CD8-positive, alpha-beta memory T cell (primary cell): ENCODE measurements at regions of chr2 and their contacts with region 1.

Region 1: GRCh38 chr2:47767880-47768609 is 14.9 kb upstream of the MSH6 start:
- DNase-seq: peak; percentile 48 to 75 (median 64)
- H3K4me3 ChIP-seq: no peak overlapping the region
- H3K4me3 Mint-ChIP-seq: peak overlapping the region in 4 of 7 donors; percentile 23 to 61 (median 42)
- H3K27ac ChIP-seq: no peak overlapping the region
- H3K27ac Mint-ChIP-seq: peak overlapping the region in 1 of 8 donors; percentile 70
- H3K4me1 ChIP-seq: peaks cover 7% of the 10 kb centered on the region
- H3K4me1 Mint-ChIP-seq: peaks cover 3 to 6% (median 5%) of the 10 kb centered on the region in 3 donors
- H3K27me3 ChIP-seq: no peaks in the 10 kb centered on the region
- H3K27me3 Mint-ChIP-seq: peaks cover 4 to 6% of the 10 kb centered on the region in 2 donors

Region 2: DNA sequence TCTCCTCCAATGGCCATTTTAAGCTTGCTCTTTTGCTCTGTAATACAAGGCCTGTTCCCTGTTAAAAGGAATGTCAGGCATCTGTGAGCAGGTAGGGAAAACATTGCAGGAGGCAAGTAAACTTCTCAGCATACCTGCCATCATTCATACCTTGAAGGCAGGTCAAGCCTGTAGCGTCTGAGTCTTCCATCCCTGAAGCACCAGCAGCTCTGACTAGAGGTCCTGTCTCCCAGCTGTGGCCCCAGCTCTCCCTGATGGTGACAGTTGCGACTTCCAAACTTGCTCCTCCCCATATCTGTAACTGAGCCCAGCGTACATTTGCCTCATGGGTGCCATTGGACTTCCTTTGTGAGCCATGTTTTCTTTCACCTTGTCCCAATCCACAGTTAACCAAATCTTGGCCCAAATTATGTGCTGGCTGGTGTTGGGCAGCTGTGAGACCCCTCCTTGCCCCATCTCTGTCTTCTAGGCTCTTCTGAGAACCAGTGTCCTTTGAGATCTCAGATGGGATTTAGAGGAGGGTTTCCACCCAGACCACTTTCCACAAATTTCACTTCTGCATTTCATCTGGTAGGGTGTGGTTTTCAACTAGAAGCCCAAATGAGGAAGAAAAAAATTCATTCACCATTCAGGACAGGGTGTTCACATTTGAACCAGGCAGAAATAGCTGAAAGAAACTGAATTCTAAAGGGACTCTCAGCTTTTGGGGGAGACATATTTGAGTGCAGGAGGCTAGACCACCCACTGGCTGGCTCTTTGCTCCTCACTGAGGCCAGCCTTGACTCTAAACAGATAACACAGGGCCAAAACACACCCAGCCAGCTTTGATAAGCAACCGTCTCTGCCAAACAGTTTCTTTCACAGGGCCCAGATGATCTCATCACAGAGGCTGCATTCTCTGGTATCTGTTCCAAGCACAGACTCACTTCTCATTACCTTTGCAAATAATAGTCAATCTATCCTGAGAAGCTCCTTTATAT is 431.5 kb before region 1 on chr2:
- CTCF ChIA-PET with region 1: interaction called, 38 read pairs
- POLR2A ChIA-PET with region 1: interaction called, 3 read pairs
- DNase-seq: no peak
- H3K4me3 ChIP-seq: no peak overlapping the region
- H3K4me3 Mint-ChIP-seq: no peak overlapping the region
- H3K27ac ChIP-seq: peak overlapping the region; percentile 31
- H3K27ac Mint-ChIP-seq: no peak overlapping the region
- H3K4me1 ChIP-seq: no peaks in the 10 kb centered on the region
- H3K4me1 Mint-ChIP-seq: peaks cover 0 to 3% (median 0%) of the 10 kb centered on the region in 3 donors
- H3K27me3 ChIP-seq: no peaks in the 10 kb centered on the region
- H3K27me3 Mint-ChIP-seq: peaks cover 6 to 19% of the 10 kb centered on the region in 2 donors

Region 3: DNA sequence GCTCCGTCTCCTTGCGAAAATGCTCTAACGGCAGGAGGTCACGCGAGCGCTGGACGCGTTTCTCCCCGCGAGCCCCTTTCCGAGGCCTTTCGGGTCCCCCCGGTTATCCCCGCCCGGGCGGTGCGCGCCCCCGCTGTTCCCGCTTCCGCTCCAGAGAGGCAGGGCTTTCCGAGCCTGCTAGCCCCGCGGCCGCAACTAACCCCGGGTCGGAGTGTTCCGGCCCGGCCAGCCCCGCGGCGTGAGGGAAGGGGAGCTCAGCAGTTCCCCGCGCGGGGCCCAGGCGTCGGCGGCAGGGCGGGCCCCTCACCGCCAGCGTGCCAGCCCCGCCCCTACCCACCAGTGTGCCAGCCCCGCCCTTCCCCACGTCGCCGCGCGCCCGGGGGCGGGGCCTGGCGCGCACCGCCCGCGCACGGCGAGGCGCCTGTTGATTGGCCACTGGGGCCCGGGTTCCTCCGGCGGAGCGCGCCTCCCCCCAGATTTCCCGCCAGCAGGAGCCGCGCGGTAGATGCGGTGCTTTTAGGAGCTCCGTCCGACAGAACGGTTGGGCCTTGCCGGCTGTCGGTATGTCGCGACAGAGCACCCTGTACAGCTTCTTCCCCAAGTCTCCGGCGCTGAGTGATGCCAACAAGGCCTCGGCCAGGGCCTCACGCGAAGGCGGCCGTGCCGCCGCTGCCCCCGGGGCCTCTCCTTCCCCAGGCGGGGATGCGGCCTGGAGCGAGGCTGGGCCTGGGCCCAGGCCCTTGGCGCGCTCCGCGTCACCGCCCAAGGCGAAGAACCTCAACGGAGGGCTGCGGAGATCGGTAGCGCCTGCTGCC is 14.8 kb after region 1 on chr2 and contains the start of gene MSH6:
- CTCF ChIA-PET with region 1: interaction called, 22 read pairs
- POLR2A ChIA-PET with region 1: no interaction called
- DNase-seq: peak; percentile 84 to 93 (median 90)
- H3K4me3 ChIP-seq: peak within 1 kb of the TSS; percentile 90
- H3K4me3 Mint-ChIP-seq: peak within 1 kb of the TSS; percentile 89 to 95 (median 90)
- H3K27ac ChIP-seq: peak within 1 kb of the TSS; percentile 79
- H3K27ac Mint-ChIP-seq: peak within 1 kb of the TSS; percentile 83 to 97 (median 91)
- H3K4me1 ChIP-seq: peaks cover 19% of the 10 kb centered on the region
- H3K4me1 Mint-ChIP-seq: peaks cover 15 to 40% (median 17%) of the 10 kb centered on the region in 3 donors
- H3K27me3 ChIP-seq: no peaks in the 10 kb centered on the region
- H3K27me3 Mint-ChIP-seq: peaks cover 0 to 2% of the 10 kb centered on the region in 2 donors
- total RNA-seq, gene MSH6: 142 to 152 TPM